Activated naive CD4-positive, alpha-beta T cell treated with anti-CD3 and anti-CD28 coated beads, Interleukin-2, amount 10 ng/mL, durations not matched to agents 7 days and 5 days (primary cell): ENCODE measurements at regions of chr3 and their contacts with region 1.

Region 1: DNA sequence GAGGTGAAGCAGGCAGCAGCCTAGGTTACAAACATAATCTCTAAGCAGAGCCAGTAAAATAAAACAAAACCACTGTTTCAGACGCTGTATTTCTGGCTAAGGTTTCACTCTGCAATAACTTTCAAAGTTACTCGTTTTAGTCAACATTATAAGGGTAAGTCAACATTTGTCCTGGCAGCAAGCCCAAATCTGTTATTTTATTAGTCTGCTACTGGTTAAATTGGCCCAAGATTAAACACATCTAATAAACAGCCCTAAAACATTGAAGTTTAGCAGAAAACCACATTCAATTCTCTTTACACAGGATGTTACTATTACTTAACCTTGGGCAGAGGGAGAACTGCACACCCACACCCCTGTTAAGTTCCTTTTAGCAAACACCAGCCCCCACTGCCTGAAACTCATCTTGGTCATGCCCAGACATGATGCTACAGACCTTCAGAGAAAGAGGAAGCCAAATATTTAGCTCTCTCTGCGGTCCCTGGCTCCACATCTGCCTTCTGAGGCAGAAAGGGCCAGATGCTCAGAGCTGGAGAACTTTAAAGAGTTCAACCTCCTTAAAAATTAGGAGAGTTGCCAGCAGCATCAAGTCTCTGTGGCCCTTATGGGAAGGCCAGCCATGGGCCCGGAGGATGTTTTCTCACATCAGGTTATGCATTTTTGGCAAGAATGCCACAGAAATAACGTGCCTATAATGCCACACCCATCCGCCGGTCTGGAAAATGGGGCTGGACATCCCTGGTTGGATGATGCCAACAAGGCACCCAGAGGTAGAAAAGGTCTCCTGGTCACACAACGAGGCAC is 17.9 kb downstream of the ARHGEF3 start:
- DNase-seq: peak; percentile 84
- H3K4me3 Mint-ChIP-seq: peak overlapping the region; percentile 62
- H3K27ac Mint-ChIP-seq: peak overlapping the region; percentile 99
- H3K4me1 Mint-ChIP-seq: peaks cover 98% of the 10 kb centered on the region
- H3K27me3 Mint-ChIP-seq: no peaks in the 10 kb centered on the region

Region 2: DNA sequence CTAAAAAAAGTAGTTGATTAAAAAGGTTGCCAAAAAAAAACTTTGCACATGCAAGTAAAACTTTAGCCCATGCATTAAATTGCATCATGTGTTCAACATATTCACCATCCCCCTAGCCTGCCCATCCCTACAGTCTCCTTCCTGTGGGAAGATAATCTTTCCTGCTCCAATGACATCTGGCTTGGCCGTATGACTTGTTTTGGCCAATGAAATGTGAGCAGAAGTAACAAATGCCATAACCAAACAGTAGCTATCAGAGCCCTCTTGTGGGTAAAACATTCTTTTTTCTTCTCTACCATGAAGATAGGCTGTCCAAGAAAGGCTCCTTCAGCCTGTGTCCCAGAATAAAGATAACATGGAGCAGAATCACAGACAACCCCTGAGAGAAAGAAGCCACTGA is 330.8 kb before region 1 on chr3:
- CTCF ChIA-PET with region 1: no interaction called
- DNase-seq: no peak
- H3K4me3 Mint-ChIP-seq: no peak overlapping the region
- H3K27ac Mint-ChIP-seq: no peak overlapping the region
- H3K4me1 Mint-ChIP-seq: no peaks in the 10 kb centered on the region
- H3K27me3 Mint-ChIP-seq: peaks cover 5% of the 10 kb centered on the region

Region 3: GRCh38 chr3:56753206-56753820 is 30.5 kb before region 1 on chr3:
- CTCF ChIA-PET with region 1: interaction called, 21 read pairs
- DNase-seq: peak; percentile 39
- H3K4me3 Mint-ChIP-seq: peak overlapping the region; percentile 85
- H3K27ac Mint-ChIP-seq: peak overlapping the region; percentile 96
- H3K4me1 Mint-ChIP-seq: peaks cover 69% of the 10 kb centered on the region
- H3K27me3 Mint-ChIP-seq: no peaks in the 10 kb centered on the region

Region 4: GRCh38 chr3:57120040-57120439 is 336.2 kb after region 1 on chr3:
- CTCF ChIA-PET with region 1: no interaction called
- DNase-seq: no peak
- H3K4me3 Mint-ChIP-seq: no peak overlapping the region
- H3K27ac Mint-ChIP-seq: no peak overlapping the region
- H3K4me1 Mint-ChIP-seq: no peaks in the 10 kb centered on the region
- H3K27me3 Mint-ChIP-seq: peaks cover 18% of the 10 kb centered on the region